GM10248 (cell line): ENCODE measurements at regions of chr11 and their contacts with region 1.

Region 1: DNA sequence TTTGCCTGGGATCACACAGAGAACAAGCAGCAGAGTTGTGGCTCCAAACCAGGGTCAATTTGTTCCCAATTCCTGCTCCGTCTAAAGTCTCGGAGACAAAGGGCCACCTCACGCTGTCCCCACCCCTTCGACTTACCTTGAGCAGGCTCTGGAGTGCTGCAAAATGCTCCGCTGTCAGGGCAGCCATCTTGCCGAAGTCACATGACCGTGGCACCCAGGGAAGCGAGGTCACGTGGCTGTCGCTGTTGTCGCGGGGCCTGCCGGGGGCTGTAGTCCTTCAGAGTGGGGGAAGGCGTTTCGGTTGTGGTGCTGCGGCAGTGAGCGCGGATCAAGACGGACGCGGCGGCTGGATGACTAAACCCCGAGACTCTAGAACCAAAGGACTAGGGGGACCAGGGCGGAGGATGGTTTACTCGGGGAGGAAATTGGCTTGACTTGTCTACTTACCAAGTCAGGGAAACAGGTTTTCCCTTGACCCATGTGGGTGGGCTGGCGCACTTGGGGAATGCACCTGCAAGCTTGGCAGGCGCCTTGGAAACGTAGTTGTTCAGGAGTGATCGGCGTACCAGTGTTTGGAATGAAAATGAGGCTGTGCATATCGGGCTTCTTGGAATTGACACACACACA is at the start of gene COMMD9:
- DNase-seq: peak; percentile 94
- CTCF ChIP-seq: no peak

Region 2: GRCh38 chr11:35974882-35975589 is 314.3 kb before region 1 on chr11:
- CTCF ChIA-PET with region 1: no interaction called
- POLR2A ChIA-PET with region 1: no interaction called
- DNase-seq: no peak
- CTCF ChIP-seq: no peak

Region 3: DNA sequence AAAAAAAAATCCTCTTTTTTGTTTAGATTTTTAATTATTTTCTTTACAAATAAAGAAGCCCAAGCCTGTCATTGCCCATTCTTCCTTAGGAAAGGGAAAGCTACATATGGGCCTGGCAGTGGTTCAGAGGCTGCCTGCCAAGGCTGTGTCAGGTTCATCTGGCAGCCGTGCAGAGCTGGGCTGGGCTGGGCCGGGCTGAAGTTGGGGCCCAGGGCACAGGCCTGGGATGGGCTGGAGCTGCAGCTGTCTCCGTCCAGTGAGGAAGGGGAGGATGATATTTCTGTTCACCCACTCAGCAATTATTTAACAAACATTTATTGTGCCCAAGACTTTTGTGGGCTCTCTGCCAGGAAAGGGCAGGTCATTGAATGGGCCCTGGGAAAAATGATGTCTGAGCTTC is 11.3 kb after region 1 on chr11:
- CTCF ChIA-PET with region 1: interaction called, 29 read pairs
- POLR2A ChIA-PET with region 1: no interaction called
- DNase-seq: no peak
- CTCF ChIP-seq: no peak

Region 4: DNA sequence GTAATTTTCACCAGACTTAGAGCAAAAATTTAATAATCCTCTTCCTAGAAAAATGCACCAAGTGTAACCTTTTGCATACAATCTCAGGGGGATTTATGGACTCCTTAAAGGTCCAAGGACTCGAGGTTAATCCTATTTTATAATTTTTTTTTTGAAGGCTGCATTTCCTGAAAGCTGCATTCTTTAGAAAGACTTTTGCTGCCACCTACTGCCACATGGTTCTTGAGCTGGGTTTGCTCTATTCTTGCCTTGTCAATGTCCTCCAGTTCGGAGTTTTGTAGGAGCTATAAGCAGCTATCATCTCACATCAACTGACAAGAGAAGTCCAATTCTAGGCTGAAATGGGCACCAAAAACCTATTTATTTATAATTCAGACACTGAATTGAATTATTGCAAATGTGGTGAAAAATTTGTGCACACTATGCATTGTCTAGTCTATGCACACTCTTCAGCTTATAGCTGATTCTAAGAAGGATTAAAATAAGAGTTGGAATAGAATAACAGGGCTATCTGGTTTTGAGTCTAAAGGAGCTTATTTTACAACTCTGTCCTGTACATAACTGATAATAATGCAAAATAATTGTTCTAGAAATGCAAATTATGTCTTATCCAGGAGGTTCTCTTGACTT is 189.5 kb after region 1 on chr11:
- CTCF ChIA-PET with region 1: interaction called, 156 read pairs
- POLR2A ChIA-PET with region 1: no interaction called
- DNase-seq: no peak
- CTCF ChIP-seq: peak; percentile 65

Region 5: DNA sequence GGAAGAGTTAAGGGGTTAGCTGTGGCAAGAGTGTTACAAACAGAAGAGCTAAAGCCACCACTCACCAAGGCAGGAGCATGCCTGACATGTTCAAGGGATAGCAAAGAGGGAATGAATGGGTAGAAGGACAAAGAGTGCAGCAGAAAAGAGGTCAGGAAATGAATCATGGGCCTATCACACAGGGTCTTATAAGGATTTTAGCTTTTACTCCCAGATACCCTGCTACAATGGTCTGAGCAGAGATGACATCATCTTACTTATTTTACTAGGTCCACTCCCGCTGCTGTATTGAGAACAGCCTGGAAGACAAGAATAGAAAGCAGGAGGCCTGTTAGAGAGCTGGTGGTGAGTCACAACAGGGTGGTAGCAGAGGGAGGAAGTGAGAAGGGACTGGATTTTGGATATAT is 211.0 kb after region 1 on chr11:
- CTCF ChIA-PET with region 1: interaction called, 185 read pairs
- POLR2A ChIA-PET with region 1: no interaction called
- DNase-seq: peak; percentile 53
- CTCF ChIP-seq: no peak